ENCODE measurements at regions of chr15 and their contacts with region 1.

Region 1: DNA sequence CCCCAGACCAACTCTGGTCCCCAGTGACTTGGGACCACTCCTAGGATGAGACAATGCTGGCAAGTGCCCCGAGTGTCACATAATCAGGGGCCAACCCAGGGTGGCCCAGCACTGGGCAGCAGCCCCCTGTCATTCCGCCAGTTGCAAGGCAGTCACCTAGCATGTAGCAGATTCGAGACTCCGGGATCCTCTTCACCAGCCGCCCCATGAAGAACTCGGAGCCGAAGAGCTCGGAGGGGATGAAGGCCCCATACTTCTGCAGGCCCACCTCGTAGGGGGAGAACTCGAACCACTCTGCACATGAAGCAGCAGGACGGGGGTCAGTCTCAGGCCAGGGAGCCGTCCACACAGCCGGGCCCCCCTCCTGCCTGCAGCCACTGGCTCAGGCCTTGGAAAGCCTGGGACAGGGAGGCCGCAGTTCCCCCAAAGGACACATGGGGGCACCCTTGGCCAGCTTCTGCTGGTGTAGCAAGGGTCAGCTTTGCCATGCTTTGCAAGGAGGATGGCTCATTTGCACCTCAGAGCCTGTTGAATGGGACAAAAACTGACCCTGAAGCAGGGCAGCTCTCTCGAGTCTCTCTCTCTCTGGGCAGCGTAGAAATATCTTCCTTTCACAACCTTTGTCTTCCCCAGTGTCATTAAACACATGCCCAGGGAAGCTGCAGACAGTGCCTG is 17.0 kb upstream of the EHD4 start:
- DNase-seq: peak; percentile 98
- ATAC-seq: peak; percentile 95
- H3K4me3 Mint-ChIP-seq: no peak overlapping the region
- H3K27ac Mint-ChIP-seq: no peak overlapping the region
- H3K4me1 Mint-ChIP-seq: peaks cover 6% of the 10 kb centered on the region
- H3K27me3 Mint-ChIP-seq: no peaks in the 10 kb centered on the region
- CTCF ChIP-seq: peak; percentile 97

Region 2: DNA sequence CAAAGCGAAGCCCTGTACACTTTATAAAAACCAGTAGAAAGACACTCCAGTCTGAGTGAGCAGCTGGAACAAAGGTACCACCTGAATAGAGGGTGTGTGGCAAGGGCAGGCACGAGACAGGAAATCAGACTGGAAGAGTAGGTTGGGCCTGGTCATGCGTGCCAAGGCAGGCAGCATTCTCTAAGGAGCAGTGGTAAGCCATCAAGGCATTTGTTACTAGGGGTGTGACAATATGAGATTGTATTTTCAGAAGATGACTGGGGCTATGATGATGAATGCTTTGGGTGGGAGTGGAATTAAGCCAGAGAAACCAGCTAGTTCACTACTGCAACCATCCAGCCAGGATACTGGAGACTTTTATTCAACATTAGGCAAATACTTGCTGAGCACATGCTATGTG is 156.5 kb before region 1 on chr15:
- CTCF ChIA-PET with region 1: no interaction called
- POLR2A ChIA-PET with region 1: no interaction called
- DNase-seq: no peak
- ATAC-seq: no peak
- H3K4me3 Mint-ChIP-seq: no peak overlapping the region
- H3K27ac Mint-ChIP-seq: no peak overlapping the region
- H3K4me1 Mint-ChIP-seq: peaks cover 7% of the 10 kb centered on the region
- H3K27me3 Mint-ChIP-seq: no peaks in the 10 kb centered on the region
- CTCF ChIP-seq: no peak

Region 3: DNA sequence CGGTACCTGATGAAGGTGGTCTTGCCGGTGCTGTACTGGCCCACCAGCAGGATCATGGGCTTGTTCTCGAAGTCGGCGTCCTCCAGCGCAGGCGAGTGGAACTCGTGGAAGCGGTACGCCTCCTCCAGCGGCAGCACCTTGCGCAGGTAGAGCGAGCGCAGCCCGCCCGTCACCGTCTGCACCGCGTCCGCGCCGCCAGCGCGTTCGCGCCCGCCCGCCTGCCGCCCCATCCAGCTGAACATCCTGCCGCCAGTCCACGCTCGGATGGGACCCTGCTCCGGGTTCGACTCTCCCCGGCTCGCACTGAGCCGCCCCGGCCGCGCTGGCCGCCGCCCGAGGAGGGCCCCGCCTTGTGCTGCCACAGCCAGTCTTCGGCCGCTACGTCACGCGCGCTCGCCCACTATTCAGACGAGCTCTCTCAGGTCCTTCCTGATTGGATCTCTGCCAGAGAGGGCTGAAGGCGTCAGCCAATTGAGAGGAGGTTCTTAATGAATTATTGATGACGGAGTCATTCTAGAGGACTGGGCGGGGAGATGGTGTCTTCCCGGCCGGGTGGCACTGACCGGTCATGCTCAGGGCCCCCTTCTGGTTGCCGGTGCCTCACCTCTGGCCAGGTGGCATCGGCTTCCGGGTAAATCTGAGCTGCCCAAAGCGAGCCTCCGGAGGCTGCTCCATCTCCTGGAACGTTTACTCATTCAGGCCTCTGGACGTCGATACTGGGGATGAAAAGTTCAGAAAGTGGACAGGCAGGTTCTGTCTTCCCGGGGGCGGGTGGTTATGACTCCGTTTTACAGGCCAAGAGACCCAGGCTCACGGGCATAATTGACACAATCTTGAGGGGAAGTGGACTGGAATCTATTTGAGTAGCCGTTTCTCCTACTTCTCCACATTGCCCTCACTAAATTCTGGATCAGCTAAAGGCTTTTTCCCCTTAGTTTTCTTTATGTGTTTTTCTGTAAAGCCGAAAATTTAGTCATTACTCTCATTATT is 16.8 kb before region 1 on chr15 and contains the start of gene EHD4:
- CTCF ChIA-PET with region 1: interaction called, 18 read pairs
- POLR2A ChIA-PET with region 1: interaction called, 8 read pairs
- DNase-seq: peak; percentile 97
- ATAC-seq: peak; percentile 93
- H3K4me3 Mint-ChIP-seq: peak within 1 kb of the TSS; percentile 85
- H3K27ac Mint-ChIP-seq: peak within 1 kb of the TSS; percentile 89
- H3K4me1 Mint-ChIP-seq: peaks cover 29% of the 10 kb centered on the region
- H3K27me3 Mint-ChIP-seq: no peaks in the 10 kb centered on the region; the same call in 1 of the 2 replicates
- CTCF ChIP-seq: no peak
- total RNA-seq, gene EHD4: 20.8 to 23.9 TPM (median 21.3 TPM) in 3 replicates

Region 4: GRCh38 chr15:42035435-42035761 is 46.0 kb after region 1 on chr15:
- CTCF ChIA-PET with region 1: interaction called, 18 read pairs
- POLR2A ChIA-PET with region 1: no interaction called
- DNase-seq: no peak
- ATAC-seq: peak; percentile 83
- H3K4me3 Mint-ChIP-seq: no peak overlapping the region
- H3K27ac Mint-ChIP-seq: peak overlapping the region; percentile 90
- H3K4me1 Mint-ChIP-seq: peaks cover 13% of the 10 kb centered on the region
- H3K27me3 Mint-ChIP-seq: peaks cover 4% of the 10 kb centered on the region
- CTCF ChIP-seq: no peak

Region 5: GRCh38 chr15:42050484-42051255 is 61.3 kb after region 1 on chr15:
- CTCF ChIA-PET with region 1: interaction called, 30 read pairs
- POLR2A ChIA-PET with region 1: interaction called, 4 read pairs
- DNase-seq: no peak
- ATAC-seq: no peak
- H3K4me3 Mint-ChIP-seq: no peak overlapping the region
- H3K27ac Mint-ChIP-seq: no peak overlapping the region
- H3K4me1 Mint-ChIP-seq: peaks cover 16% of the 10 kb centered on the region
- H3K27me3 Mint-ChIP-seq: no peaks in the 10 kb centered on the region
- CTCF ChIP-seq: no peak

Region 6: GRCh38 chr15:42056934-42057779 is 67.8 kb after region 1 on chr15:
- CTCF ChIA-PET with region 1: interaction called, 49 read pairs
- POLR2A ChIA-PET with region 1: interaction called, 4 read pairs
- DNase-seq: peak; percentile 89
- ATAC-seq: peak; percentile 96
- H3K4me3 Mint-ChIP-seq: peak overlapping the region; percentile 48
- H3K27ac Mint-ChIP-seq: peak overlapping the region; percentile 57; the same call in 1 of the 2 replicates
- H3K4me1 Mint-ChIP-seq: peaks cover 12% of the 10 kb centered on the region
- H3K27me3 Mint-ChIP-seq: no peaks in the 10 kb centered on the region
- CTCF ChIP-seq: 0 out of 2 replicates have a peak, but pooled peaks have one; percentile 30

Region 7: DNA sequence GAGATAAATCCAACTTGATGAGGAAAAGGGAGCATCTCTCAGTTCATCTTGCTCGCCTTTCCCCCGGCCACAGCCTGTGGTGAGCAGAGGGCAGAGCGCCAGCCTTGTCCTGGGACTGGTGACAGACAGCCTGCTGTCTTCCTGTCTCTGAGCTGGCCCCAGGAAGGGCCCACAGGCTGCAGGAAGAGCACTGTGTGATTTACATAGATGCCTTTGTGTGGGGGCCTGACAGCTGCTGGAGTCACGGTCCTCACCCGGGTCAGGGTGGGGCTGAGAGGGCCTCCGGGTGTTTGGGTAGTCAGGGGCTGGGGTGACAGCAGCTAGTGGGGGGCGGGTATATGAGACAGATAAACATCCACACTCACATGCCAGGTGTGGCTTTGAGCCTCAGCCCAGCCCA is 75.6 kb after region 1 on chr15:
- CTCF ChIA-PET with region 1: interaction called, 14 read pairs
- POLR2A ChIA-PET with region 1: no interaction called
- DNase-seq: no peak
- ATAC-seq: 0 out of 2 replicates have a peak, but pooled peaks have one; percentile 15
- H3K4me3 Mint-ChIP-seq: no peak overlapping the region
- H3K27ac Mint-ChIP-seq: no peak overlapping the region
- H3K4me1 Mint-ChIP-seq: peaks cover 5% of the 10 kb centered on the region
- H3K27me3 Mint-ChIP-seq: no peaks in the 10 kb centered on the region; the same call in 1 of the 2 replicates
- CTCF ChIP-seq: no peak